Heart right ventricle (tissue), 16 donors: ENCODE measurements at regions of chr2 and their contacts with region 1.

Region 1: GRCh38 chr2:4992226-4992625 is 700.0 kb upstream of the SOX11 start:
- DNase-seq: peak in 1 of 2 donors; percentile 8
- ATAC-seq: peak in 2 of 8 donors; percentile 38 to 72
- H3K4me3 ChIP-seq: no peak overlapping the region
- H3K27ac ChIP-seq: no peak overlapping the region
- H3K4me1 ChIP-seq: no peaks in the 10 kb centered on the region
- H3K27me3 ChIP-seq: peaks cover 0 to 4% (median 0%) of the 10 kb centered on the region in 7 donors
- CTCF ChIP-seq: peak in 7 of 9 donors; percentile 23 to 58 (median 44)

Region 2: GRCh38 chr2:5042665-5043440 is 50.6 kb after region 1 on chr2:
- intact Hi-C with region 1: no loop called
- DNase-seq: no peak
- ATAC-seq: peak in 1 of 8 donors; percentile 47
- H3K4me3 ChIP-seq: no peak overlapping the region
- H3K27ac ChIP-seq: no peak overlapping the region
- H3K4me1 ChIP-seq: no peaks in the 10 kb centered on the region
- H3K27me3 ChIP-seq: no peaks in the 10 kb centered on the region
- CTCF ChIP-seq: no peak

Region 3: GRCh38 chr2:5070257-5070656 is 78.0 kb after region 1 on chr2:
- intact Hi-C with region 1: no loop called
- DNase-seq: no peak
- ATAC-seq: no peak
- H3K4me3 ChIP-seq: no peak overlapping the region
- H3K27ac ChIP-seq: no peak overlapping the region
- H3K4me1 ChIP-seq: no peaks in the 10 kb centered on the region
- H3K27me3 ChIP-seq: no peaks in the 10 kb centered on the region
- CTCF ChIP-seq: no peak

Region 4: GRCh38 chr2:5360081-5360480 is 367.9 kb after region 1 on chr2:
- intact Hi-C with region 1: loop called in 6 of 10 experiments (anchors 5 to 10 kb)
- DNase-seq: no peak
- ATAC-seq: no peak
- H3K4me3 ChIP-seq: no peak overlapping the region
- H3K27ac ChIP-seq: no peak overlapping the region
- H3K4me1 ChIP-seq: no peaks in the 10 kb centered on the region
- H3K27me3 ChIP-seq: peaks cover 0 to 12% (median 0%) of the 10 kb centered on the region in 7 donors
- CTCF ChIP-seq: no peak